Naive thymus-derived CD4-positive, alpha-beta T cell (primary cell): ENCODE measurements at regions of chr6 and their contacts with region 1.

Region 1: DNA sequence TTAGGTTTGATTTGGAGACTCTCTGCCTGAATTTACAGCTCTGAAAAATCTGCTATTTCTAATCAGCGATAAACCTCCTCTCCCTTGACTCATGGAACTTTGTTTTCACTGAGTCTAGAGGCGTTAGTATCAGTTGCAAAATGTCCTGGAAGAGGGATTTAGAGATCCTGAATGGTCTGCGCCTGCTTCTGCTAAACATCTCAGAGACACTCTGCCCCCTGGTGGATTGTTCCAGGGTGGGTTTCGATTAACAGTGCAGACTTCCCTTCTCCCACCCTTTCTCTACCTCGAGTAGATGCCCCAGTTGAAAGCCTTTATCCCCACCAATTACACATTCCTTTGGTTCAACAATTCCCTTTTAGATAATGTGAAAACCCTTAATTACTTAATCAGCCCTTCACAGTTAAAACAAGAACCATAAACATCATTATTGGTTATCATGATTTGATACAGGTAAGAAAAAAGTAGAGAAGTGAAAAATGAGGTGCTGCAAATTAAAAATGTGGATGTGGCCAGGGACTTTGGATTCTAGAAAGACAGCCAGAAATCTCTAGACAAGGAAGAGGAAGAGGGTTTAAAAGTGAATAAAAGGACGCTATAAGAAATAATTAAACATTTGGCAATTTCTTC is 5.5 kb downstream of the HTR1B start:
- DNase-seq: no peak
- ATAC-seq: peak; percentile 50
- H3K4me3 ChIP-seq: no peak overlapping the region
- H3K4me3 Mint-ChIP-seq: no peak overlapping the region
- H3K27ac ChIP-seq: no peak overlapping the region
- H3K27ac Mint-ChIP-seq: no peak overlapping the region
- H3K4me1 ChIP-seq: no peaks in the 10 kb centered on the region
- H3K4me1 Mint-ChIP-seq: peaks cover 0 to 9% (median 8%) of the 10 kb centered on the region in 7 donors
- H3K27me3 ChIP-seq: no peaks in the 10 kb centered on the region
- H3K27me3 Mint-ChIP-seq: peaks cover 15 to 42% (median 21%) of the 10 kb centered on the region in 5 donors

Region 2: GRCh38 chr6:75893058-75893775 is 1564.6 kb before region 1 on chr6:
- CTCF ChIA-PET with region 1: no interaction called
- POLR2A ChIA-PET with region 1: no interaction called
- intact Hi-C with region 1: loop called in 1 of 2 experiments (anchors 1 kb)
- DNase-seq: peak in 5 of 9 donors; percentile 12 to 28 (median 14)
- ATAC-seq: peak; percentile 46
- H3K4me3 ChIP-seq: no peak overlapping the region
- H3K4me3 Mint-ChIP-seq: no peak overlapping the region
- H3K27ac ChIP-seq: no peak overlapping the region
- H3K27ac Mint-ChIP-seq: no peak overlapping the region
- H3K4me1 ChIP-seq: no peaks in the 10 kb centered on the region
- H3K4me1 Mint-ChIP-seq: peaks cover 0 to 4% (median 0%) of the 10 kb centered on the region in 7 donors
- H3K27me3 ChIP-seq: no peaks in the 10 kb centered on the region
- H3K27me3 Mint-ChIP-seq: peaks cover 0 to 5% (median 3%) of the 10 kb centered on the region in 5 donors

Region 3: DNA sequence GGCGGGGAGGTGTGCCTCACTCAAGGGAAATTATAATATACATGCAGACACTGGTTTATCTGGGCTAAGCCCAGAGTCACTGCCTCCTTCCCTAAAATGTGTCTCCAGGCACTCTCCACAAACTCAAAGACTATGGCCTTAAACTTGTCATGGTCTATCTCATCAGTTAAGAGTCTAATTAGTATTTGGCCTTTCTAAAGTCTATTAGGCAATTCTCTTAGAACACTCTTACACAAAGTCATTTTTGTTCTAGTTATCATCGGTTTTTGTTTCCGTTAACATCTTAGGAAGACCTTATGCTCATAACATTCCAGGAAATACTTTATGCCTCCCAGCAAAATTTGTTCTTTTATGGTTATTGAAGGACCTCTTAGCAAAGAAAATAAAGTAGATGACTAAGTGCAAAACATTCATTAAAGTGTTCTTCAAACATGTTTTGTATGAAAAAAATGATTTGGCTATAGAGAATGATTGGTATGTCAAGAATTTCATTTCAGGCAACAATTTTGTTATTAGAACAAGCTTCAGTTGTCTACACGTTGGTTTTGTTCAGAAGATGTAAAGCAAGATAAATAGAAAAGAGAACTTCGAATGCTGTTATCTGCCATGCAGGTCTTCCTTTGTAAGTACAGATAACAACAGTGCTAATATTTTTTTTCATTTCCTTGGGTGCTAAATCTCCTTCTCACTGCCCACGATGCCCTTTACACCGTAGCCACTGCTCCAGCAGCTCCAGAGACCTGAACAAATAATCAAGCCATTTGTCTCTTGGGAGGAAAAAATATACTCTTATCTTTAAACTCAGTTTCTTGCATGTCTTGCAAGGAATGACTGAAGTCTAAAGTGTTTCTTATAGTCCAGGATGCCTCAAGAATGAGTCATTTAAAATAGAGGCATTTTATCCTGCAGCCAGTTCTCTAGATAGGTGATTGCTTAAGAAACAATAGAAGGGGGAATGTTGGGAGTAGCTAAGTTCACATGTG is 165.0 kb before region 1 on chr6:
- CTCF ChIA-PET with region 1: no interaction called
- POLR2A ChIA-PET with region 1: no interaction called
- intact Hi-C with region 1: no loop called
- DNase-seq: no peak
- ATAC-seq: peak; percentile 38
- H3K4me3 ChIP-seq: no peak overlapping the region
- H3K4me3 Mint-ChIP-seq: no peak overlapping the region
- H3K27ac ChIP-seq: no peak overlapping the region
- H3K27ac Mint-ChIP-seq: no peak overlapping the region
- H3K4me1 ChIP-seq: no peaks in the 10 kb centered on the region
- H3K4me1 Mint-ChIP-seq: no peaks in the 10 kb centered on the region
- H3K27me3 ChIP-seq: no peaks in the 10 kb centered on the region
- H3K27me3 Mint-ChIP-seq: no peaks in the 10 kb centered on the region